Transverse colon (tissue), 4 donors: ENCODE measurements at regions of chr1 and their contacts with region 1.

Region 1: DNA sequence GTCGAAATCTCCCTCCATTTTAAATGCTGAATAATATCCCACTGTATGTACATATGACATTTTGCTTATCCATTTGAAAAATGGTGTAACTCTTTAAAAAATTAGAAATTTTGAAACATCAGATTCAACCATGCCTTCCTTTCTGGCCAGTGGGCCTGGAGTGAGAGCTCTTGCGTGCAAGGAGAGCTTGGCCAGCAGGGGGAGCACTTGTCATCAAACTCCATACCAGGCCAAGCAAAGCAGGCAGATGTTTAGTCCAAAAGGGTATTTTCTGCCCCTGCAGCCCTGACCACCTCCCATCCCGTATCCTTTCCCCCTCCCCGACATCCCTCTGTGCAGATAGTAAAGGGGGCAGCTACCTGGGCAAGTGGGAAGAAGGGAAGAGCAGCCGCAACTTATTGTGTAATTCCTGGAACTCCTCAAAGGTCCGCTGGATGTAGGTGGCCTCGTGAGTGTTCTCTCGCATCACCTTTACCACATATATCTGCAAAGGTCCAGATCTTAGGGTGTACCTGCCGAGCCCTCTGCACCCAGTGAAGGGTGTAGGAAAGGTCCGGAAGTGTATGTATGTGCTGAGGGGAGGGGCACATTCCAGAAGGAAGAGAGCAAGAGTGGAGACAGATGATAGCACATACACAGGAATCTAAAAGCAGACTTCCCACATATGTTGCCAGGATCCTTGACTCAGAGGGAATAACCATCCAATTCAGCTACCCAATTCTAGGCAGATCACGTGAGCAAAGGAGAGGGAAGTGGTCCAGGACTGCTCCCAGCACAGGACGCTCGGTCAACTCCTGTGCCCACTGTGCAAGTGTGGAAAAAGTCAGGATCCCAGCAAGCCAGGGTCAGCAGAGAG is 19.9 kb upstream of the PPP1R15B start:
- DNase-seq: peak; percentile 83
- H3K4me3 ChIP-seq: no peak overlapping the region
- H3K27ac ChIP-seq: peak overlapping the region in 3 of 4 donors; percentile 2 to 58 (median 26)
- H3K4me1 ChIP-seq: no peaks in the 10 kb centered on the region
- H3K27me3 ChIP-seq: no peaks in the 10 kb centered on the region
- CTCF ChIP-seq: peak; percentile 84 to 95 (median 92)
- EP300 ChIP-seq: no peak
- POLR2A ChIP-seq: no peak

Region 2: GRCh38 chr1:204506961-204507387 is 75.4 kb after region 1 on chr1:
- in situ Hi-C with region 1: no loop called
- intact Hi-C with region 1: loop called (anchors 5 kb)
- DNase-seq: peak; percentile 88
- H3K4me3 ChIP-seq: peak overlapping the region; percentile 7 to 64 (median 42)
- H3K27ac ChIP-seq: peak overlapping the region; percentile 89 to 91 (median 90)
- H3K4me1 ChIP-seq: peaks cover 0 to 21% (median 15%) of the 10 kb centered on the region in 4 donors
- H3K27me3 ChIP-seq: no peaks in the 10 kb centered on the region
- CTCF ChIP-seq: no peak
- EP300 ChIP-seq: no peak
- POLR2A ChIP-seq: no peak

Region 3: DNA sequence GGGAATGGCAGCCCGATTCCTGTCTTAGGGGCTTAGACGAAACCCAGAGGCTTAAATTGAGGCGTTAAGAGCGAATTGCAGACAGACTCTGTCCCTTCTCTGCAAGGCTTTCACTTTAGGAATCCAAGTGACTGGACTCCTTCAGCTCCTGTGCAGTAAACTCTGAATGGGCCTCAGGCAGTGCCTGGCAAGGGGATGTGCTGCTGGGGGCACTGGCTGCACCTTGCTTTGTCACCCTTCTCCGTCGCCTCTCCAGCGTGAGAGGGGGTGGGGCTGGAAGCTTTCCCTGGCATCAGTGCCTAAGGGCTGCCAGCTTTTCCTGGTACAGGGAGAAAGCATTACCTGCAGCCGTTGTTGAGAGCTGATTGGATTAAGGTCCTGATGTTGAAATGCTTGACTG is 399.2 kb after region 1 on chr1:
- in situ Hi-C with region 1: no loop called
- intact Hi-C with region 1: no loop called
- DNase-seq: no peak
- H3K4me3 ChIP-seq: no peak overlapping the region
- H3K27ac ChIP-seq: peak overlapping the region in 3 of 4 donors; percentile 22 to 77 (median 72)
- H3K4me1 ChIP-seq: peaks cover 0 to 21% (median 3%) of the 10 kb centered on the region in 4 donors
- H3K27me3 ChIP-seq: peaks cover 16% of the 10 kb centered on the region
- CTCF ChIP-seq: no peak
- EP300 ChIP-seq: no peak
- POLR2A ChIP-seq: no peak